ENCODE measurements at regions of chr1 and their contacts with region 1.

Region 1: GRCh38 chr1:183783767-183784637 is 20.9 kb upstream of the RGL1 start:
- DNase-seq: no peak
- H3K4me3 ChIP-seq: no peak overlapping the region
- H3K27ac ChIP-seq: no peak overlapping the region
- H3K4me1 ChIP-seq: no peaks in the 10 kb centered on the region
- CTCF ChIP-seq: no peak

Region 2: GRCh38 chr1:183834568-183834967 is 50.6 kb after region 1 on chr1:
- CTCF ChIA-PET with region 1: no interaction called
- POLR2A ChIA-PET with region 1: no interaction called
- intact Hi-C with region 1: loop called (anchors 5 kb)
- DNase-seq: no peak
- H3K4me3 ChIP-seq: no peak overlapping the region
- H3K27ac ChIP-seq: no peak overlapping the region
- H3K4me1 ChIP-seq: no peaks in the 10 kb centered on the region
- CTCF ChIP-seq: no peak

Region 3: GRCh38 chr1:183958958-183959357 is 175.0 kb after region 1 on chr1:
- CTCF ChIA-PET with region 1: no interaction called
- POLR2A ChIA-PET with region 1: no interaction called
- intact Hi-C with region 1: no loop called
- DNase-seq: no peak
- H3K4me3 ChIP-seq: no peak overlapping the region
- H3K27ac ChIP-seq: no peak overlapping the region
- H3K4me1 ChIP-seq: peaks cover 4% of the 10 kb centered on the region
- CTCF ChIP-seq: no peak